Activated T-helper 2 cell treated with anti-CD3 and anti-CD28 coated beads, Interferon-gamma antibody, Interleukin-2, Interleukin-4, amounts not matched to agents 10 μg/mL and 5 μg/mL and 100 μg/mL, durations not matched to agents 14 hours and 24 hours and 36 hours (primary cell): ENCODE measurements at regions of chr1 and their contacts with region 1.

Region 1: DNA sequence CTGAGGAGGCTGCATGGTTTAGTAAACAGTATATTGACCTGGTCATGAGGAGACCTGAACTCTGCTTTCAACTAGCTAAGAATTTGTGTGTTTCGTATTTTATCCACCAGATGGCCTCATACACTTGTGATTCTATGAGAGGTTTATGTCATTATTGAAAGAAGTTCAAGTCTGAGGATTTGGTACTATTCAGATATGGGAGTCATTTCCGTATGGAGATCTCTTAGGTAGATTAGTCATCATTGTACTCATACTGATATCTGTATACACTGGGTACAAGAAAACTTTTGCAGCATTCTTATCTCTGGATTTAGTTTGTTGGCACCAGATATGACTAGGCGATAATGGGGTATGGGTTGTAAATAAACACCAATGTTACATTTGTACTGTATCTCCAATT is 26.6 kb downstream of the ATF6 start:
- DNase-seq: no peak
- H3K4me3 Mint-ChIP-seq: no peak overlapping the region
- H3K27ac Mint-ChIP-seq: peak overlapping the region; percentile 11
- H3K4me1 Mint-ChIP-seq: peaks cover 41% of the 10 kb centered on the region
- H3K27me3 Mint-ChIP-seq: no peaks in the 10 kb centered on the region

Region 2: GRCh38 chr1:161772397-161772796 is 20.3 kb before region 1 on chr1:
- intact Hi-C with region 1: loop called (anchors 2 kb)
- DNase-seq: no peak
- H3K4me3 Mint-ChIP-seq: no peak overlapping the region
- H3K27ac Mint-ChIP-seq: no peak overlapping the region
- H3K4me1 Mint-ChIP-seq: peaks cover 26% of the 10 kb centered on the region
- H3K27me3 Mint-ChIP-seq: no peaks in the 10 kb centered on the region

Region 3: GRCh38 chr1:161905269-161905884 is 112.6 kb after region 1 on chr1:
- intact Hi-C with region 1: loop called (anchors 5 kb)
- DNase-seq: no peak
- H3K4me3 Mint-ChIP-seq: no peak overlapping the region
- H3K27ac Mint-ChIP-seq: no peak overlapping the region
- H3K4me1 Mint-ChIP-seq: peaks cover 10% of the 10 kb centered on the region
- H3K27me3 Mint-ChIP-seq: no peaks in the 10 kb centered on the region

Region 4: DNA sequence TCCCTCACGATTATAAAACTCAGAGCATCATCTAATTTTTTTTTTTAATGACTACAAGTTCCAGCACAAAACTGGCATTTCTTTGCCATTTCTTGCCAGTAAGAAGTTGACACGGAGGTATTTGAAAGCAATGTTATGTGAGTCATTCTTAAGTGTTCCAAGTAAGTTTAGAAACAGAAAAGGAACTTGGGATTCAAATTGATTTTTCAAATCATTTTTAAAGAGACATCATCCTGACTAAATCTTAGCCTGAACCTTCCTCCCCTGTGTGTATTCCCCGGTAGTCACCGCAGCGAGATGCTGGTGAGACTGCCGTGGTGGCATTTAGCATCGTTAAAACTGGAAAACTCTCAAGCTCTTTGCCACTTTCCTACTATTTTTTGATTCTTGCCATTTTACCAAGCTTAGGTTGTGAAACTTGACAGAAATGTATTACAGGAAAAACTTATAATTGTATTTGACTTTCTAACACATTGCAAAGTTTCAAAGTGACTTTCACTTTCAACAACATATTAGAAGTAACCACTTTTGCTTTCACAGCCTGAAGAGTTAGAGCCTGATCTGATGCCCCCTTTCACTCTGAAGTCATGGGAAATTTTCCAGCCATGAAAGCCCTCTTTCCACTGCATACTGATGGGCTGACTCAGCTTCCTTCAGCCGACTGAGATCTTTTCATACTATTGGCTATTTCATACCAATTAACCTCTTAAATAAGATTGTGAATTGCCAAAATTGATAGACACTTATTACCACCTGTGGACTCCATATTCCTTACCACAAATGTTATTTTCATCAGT is 169.5 kb after region 1 on chr1:
- intact Hi-C with region 1: loop called (anchors 2 kb)
- DNase-seq: no peak
- H3K4me3 Mint-ChIP-seq: peak overlapping the region; percentile 75
- H3K27ac Mint-ChIP-seq: peak overlapping the region; percentile 89
- H3K4me1 Mint-ChIP-seq: peaks cover 32% of the 10 kb centered on the region
- H3K27me3 Mint-ChIP-seq: no peaks in the 10 kb centered on the region

Region 5: GRCh38 chr1:162040681-162041080 is 247.9 kb after region 1 on chr1:
- intact Hi-C with region 1: loop called (anchors 1 kb)
- DNase-seq: no peak
- H3K4me3 Mint-ChIP-seq: no peak overlapping the region
- H3K27ac Mint-ChIP-seq: no peak overlapping the region
- H3K4me1 Mint-ChIP-seq: peaks cover 2% of the 10 kb centered on the region
- H3K27me3 Mint-ChIP-seq: peaks cover 16% of the 10 kb centered on the region

Region 6: DNA sequence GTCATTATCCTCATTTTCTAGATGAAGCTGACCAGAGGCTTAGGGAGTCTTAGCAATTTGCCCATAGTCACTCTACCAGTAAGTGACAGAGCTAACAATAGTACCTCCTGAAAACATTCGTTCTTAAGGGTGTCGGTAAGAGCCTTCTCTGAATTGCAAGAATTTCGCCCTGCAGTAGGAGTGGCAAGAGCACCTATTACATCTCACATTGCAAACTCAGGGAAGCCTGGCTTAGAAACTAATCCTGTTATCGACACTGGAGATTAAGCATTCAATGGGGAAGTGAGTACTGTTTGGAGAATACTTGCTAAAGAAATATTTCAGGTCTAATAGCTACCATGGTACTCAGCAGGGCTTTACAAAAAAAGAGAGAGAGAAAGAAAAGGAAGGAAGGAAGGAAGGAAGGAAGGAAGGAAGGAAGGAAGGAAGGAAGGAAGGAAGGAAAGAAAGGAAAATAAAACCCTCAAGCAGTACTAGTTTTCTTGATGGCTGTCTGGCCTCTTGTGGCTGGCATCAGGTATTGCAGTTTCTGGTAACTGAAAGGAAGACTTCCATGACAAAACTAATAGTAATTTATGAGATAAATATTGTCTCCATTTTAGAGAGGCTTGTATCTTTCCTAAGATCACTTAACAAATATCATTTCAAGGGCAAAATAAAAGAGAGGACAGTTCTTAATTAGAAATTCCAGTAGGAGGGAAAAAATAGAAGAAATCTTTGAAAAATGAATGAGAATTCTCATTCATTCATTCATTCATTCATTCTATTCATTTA is 599.2 kb after region 1 on chr1:
- intact Hi-C with region 1: loop called (anchors 10 kb)
- DNase-seq: no peak
- H3K4me3 Mint-ChIP-seq: no peak overlapping the region
- H3K27ac Mint-ChIP-seq: no peak overlapping the region
- H3K4me1 Mint-ChIP-seq: peaks cover 6% of the 10 kb centered on the region
- H3K27me3 Mint-ChIP-seq: peaks cover 21% of the 10 kb centered on the region